ENCODE measurements at regions of chr2 and their contacts with region 1.

Region 1: DNA sequence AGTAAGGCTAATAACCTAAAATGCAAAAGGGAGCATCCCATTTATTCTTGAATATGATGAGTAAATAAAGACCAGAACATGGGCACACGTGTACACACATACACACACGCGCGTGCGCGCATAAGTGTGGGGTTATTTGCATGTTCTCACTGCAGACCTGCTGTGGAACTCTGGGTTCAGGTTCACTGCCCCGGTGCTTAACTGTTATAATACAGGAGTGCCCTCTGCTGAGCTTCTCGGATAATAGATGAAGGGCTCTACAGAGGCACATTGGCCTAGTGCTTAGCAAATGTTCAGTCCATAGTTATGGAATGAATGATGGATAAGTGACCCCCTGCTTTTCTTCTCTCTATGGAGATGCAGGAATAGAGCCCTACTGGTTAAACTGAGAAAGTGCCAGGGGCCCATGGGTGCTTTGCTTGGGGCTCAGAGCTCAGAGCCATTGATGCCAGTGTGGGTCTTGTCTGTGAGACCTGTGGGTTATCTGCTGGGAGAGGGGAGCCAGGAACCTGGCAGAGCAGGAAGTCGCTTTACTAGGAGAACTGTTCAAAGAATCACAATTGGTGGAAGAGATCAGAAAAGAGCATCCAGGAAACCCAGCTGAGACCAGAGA is 3.6 kb upstream of the ARL4C start:
- DNase-seq: peak; percentile 81
- H3K4me3 Mint-ChIP-seq: no peak overlapping the region
- H3K27ac Mint-ChIP-seq: peak overlapping the region; percentile 65
- H3K4me1 Mint-ChIP-seq: peaks cover 31% of the 10 kb centered on the region
- H3K27me3 Mint-ChIP-seq: peaks cover 12% of the 10 kb centered on the region

Region 2: GRCh38 chr2:234032279-234032856 is 468.1 kb before region 1 on chr2:
- CTCF ChIA-PET with region 1: interaction called, 7 read pairs
- POLR2A ChIA-PET with region 1: interaction called, 32 read pairs
- DNase-seq: peak; percentile 81
- H3K4me3 Mint-ChIP-seq: peak overlapping the region; percentile 12
- H3K27ac Mint-ChIP-seq: peak overlapping the region; percentile 86
- H3K4me1 Mint-ChIP-seq: peaks cover 44% of the 10 kb centered on the region
- H3K27me3 Mint-ChIP-seq: peaks cover 10% of the 10 kb centered on the region

Region 3: DNA sequence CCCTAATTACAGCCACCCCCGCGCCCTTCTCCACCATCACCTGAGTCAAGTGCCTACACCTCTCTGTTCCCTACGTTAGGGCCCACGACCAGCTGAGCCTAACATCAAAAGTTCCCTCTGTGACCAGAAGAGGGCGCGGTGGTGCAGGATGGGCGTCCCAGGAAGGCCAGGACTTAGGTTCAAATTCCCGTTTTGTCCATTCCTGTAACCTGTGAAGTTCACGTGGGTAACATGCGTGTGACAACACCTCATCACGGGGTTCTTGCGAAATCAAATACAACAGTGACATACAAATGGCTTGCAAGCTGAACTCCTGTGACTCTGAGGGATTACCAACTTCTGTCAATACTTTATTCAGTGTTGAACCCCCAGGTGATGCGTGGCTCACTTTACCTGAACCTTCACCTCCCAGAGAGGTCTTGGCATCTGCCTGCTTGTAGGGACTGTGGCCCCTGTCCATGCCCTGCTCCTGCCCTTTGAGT is 211.5 kb before region 1 on chr2:
- CTCF ChIA-PET with region 1: interaction called, 103 read pairs
- POLR2A ChIA-PET with region 1: interaction called, 572 read pairs
- DNase-seq: peak; percentile 83
- H3K4me3 Mint-ChIP-seq: peak overlapping the region; percentile 47
- H3K27ac Mint-ChIP-seq: peak overlapping the region; percentile 100
- H3K4me1 Mint-ChIP-seq: peaks cover 83% of the 10 kb centered on the region
- H3K27me3 Mint-ChIP-seq: no peaks in the 10 kb centered on the region

Region 4: GRCh38 chr2:234403108-234403507 is 97.4 kb before region 1 on chr2:
- CTCF ChIA-PET with region 1: no interaction called
- POLR2A ChIA-PET with region 1: interaction called, 36 read pairs
- DNase-seq: no peak
- H3K4me3 Mint-ChIP-seq: no peak overlapping the region
- H3K27ac Mint-ChIP-seq: peak overlapping the region; percentile 6
- H3K4me1 Mint-ChIP-seq: peaks cover 73% of the 10 kb centered on the region
- H3K27me3 Mint-ChIP-seq: no peaks in the 10 kb centered on the region

Region 5: DNA sequence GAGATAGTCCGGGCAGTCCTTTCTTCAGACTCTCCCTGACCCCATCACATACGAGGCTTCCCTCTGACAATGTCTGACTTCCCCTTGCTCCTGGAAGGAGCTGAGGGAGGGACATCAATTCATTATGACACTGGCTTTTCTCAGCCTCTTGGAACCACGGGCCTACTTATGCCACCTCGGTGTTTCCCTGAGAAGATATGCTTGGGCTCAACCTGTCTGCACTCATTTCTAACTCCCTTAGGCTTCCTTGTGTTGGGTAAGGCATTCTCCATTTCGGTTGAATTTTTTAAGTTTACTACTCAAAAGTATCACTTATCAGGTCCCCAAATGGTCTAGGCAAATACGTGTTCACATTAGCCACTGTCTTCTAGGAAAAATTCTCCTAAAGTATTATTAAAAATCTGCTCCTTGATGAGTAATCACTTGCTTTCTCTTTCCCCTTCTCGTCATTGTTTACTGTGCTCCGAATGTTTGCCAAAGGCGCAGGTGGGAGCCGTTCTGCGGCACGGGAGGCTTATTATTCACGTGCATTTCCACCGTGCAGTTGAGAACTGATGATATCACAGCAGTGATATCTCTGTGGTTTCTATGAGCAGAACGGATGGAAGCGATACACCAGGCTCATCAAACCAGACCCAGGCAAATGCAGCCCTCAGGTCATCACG is 36.7 kb before region 1 on chr2:
- CTCF ChIA-PET with region 1: interaction called, 3 read pairs
- POLR2A ChIA-PET with region 1: interaction called, 42 read pairs
- DNase-seq: peak; percentile 78
- H3K4me3 Mint-ChIP-seq: peak overlapping the region; percentile 58
- H3K27ac Mint-ChIP-seq: peak overlapping the region; percentile 86
- H3K4me1 Mint-ChIP-seq: peaks cover 61% of the 10 kb centered on the region
- H3K27me3 Mint-ChIP-seq: no peaks in the 10 kb centered on the region

Region 6: GRCh38 chr2:234661175-234661574 is 160.7 kb after region 1 on chr2:
- CTCF ChIA-PET with region 1: no interaction called
- POLR2A ChIA-PET with region 1: no interaction called
- DNase-seq: no peak
- H3K4me3 Mint-ChIP-seq: no peak overlapping the region
- H3K27ac Mint-ChIP-seq: no peak overlapping the region
- H3K4me1 Mint-ChIP-seq: no peaks in the 10 kb centered on the region
- H3K27me3 Mint-ChIP-seq: no peaks in the 10 kb centered on the region